Activated CD8-positive, alpha-beta T cell treated with anti-CD3 and anti-CD28 coated beads, Interleukin-2, amount 10 ng/mL, durations not matched to agents 7 days and 5 days (primary cell): ENCODE measurements at regions of chr7 and their contacts with region 1.

Region 1: GRCh38 chr7:102425639-102426267 is 7.6 kb upstream of the ORAI2 start:
- DNase-seq: peak; percentile 89
- ATAC-seq: peak; percentile 84
- H3K4me3 Mint-ChIP-seq: peak overlapping the region; percentile 79
- H3K27ac Mint-ChIP-seq: peak overlapping the region; percentile 99
- H3K4me1 Mint-ChIP-seq: peaks cover 79% of the 10 kb centered on the region
- H3K27me3 Mint-ChIP-seq: no peaks in the 10 kb centered on the region

Region 2: GRCh38 chr7:102440078-102440795 is 14.5 kb after region 1 on chr7:
- CTCF ChIA-PET with region 1: interaction called, 6 read pairs
- POLR2A ChIA-PET with region 1: interaction called, 21 read pairs
- DNase-seq: no peak
- ATAC-seq: no peak
- H3K4me3 Mint-ChIP-seq: no peak overlapping the region
- H3K27ac Mint-ChIP-seq: no peak overlapping the region
- H3K4me1 Mint-ChIP-seq: peaks cover 33% of the 10 kb centered on the region
- H3K27me3 Mint-ChIP-seq: no peaks in the 10 kb centered on the region

Region 3: DNA sequence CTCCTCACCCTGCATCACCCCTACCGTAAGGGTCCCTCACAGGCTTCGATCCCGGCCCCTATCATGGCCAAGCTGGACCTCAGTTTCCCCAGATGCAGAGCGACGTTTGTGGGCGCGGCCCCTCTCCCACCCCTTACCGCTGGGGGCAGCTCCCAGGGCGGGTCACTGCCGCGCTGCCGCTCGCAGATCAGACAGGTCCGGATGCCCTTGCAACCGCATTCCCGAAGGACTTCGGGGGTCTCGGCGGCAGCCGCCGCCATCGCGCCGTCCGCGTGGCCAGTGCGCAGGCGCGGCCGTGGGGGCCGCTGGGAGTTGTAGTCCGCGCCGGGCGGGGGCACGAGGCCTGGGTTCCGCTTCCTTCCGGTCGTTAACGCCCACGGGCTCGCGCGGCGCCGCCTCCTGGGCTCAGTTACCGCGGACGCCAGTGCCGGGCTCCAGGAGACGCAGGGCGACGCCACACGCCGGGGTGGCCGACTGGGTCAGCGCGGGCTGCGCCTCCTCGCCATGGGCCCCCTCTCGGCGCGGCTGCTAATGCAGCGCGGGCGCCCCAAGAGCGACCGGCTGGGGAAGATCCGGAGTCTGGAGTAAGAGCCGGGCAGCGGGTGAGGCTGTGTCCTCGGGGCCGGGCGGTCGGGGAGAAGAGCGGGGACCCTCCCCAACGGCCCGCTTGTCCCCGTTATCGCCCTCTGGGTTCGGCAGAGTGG is 39.0 kb after region 1 on chr7 and contains the starts of genes ALKBH4 and LRWD1:
- CTCF ChIA-PET with region 1: no interaction called
- POLR2A ChIA-PET with region 1: interaction called, 10 read pairs
- DNase-seq: peak; percentile 94
- ATAC-seq: peak; percentile 94
- H3K4me3 Mint-ChIP-seq: peak within 1 kb of the TSS; percentile 95
- H3K27ac Mint-ChIP-seq: peak within 1 kb of the TSS; percentile 87
- H3K4me1 Mint-ChIP-seq: peaks cover 26% of the 10 kb centered on the region
- H3K27me3 Mint-ChIP-seq: no peaks in the 10 kb centered on the region
- total RNA-seq, gene ALKBH4: 10.8 to 11.1 TPM
- total RNA-seq, gene LRWD1: 16.7 to 21.7 TPM